ENCODE measurements at regions of chr4 and their contacts with region 1.

Region 1: GRCh38 chr4:18593445-18594002 is 572.0 kb upstream of the LCORL start:
- DNase-seq: peak in 32 of 35 experiments; percentile 0 to 77 (median 30)
- ATAC-seq: peak in 3 of 4 experiments; percentile 58 to 63 (median 59)
- H3K4me3 ChIP-seq: no peak overlapping the region
- H3K4me3 Mint-ChIP-seq: no peak overlapping the region
- H3K27ac ChIP-seq: no peak overlapping the region
- H3K27ac Mint-ChIP-seq: no peak overlapping the region
- H3K4me1 ChIP-seq: no peaks in the 10 kb centered on the region
- H3K4me1 Mint-ChIP-seq: peaks cover 5 to 6% (median 6%) of the 10 kb centered on the region in 3 donors
- H3K27me3 ChIP-seq: no peaks in the 10 kb centered on the region
- H3K27me3 Mint-ChIP-seq: peaks cover 19 to 23% of the 10 kb centered on the region in 2 donors

Region 2: DNA sequence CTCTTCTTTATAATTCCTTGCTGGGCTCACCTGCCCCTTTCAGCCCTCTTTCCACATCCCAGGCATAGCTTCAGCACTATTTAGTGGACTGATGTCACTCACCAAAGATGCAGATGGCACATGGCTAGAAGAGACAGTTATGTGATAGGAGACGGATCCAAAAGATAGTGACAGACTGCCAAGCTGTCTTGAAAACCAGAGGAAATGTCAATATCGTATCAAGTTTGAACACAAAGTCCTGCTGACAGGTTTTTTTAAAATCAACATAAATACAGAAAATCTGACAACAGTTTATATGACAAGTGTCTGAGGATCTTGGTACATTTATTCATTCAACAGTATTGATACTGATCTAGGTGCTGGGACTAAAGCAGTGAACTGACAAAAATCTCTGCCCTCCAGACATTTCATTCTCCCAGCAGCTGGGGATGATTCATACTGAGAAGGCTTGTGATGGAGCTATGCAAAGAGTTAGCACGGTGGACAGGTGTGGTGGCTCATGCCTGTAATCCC is 1064.0 kb before region 1 on chr4:
- CTCF ChIA-PET with region 1: interaction called in 1 of 2 experiments, 11 read pairs
- POLR2A ChIA-PET with region 1: no interaction called
- DNase-seq: no peak
- ATAC-seq: no peak
- H3K4me3 ChIP-seq: no peak overlapping the region
- H3K4me3 Mint-ChIP-seq: no peak overlapping the region
- H3K27ac ChIP-seq: no peak overlapping the region
- H3K27ac Mint-ChIP-seq: no peak overlapping the region
- H3K4me1 ChIP-seq: no peaks in the 10 kb centered on the region
- H3K4me1 Mint-ChIP-seq: no peaks in the 10 kb centered on the region
- H3K27me3 ChIP-seq: peaks cover under 1 to 17% of the 10 kb centered on the region in 2 experiments
- H3K27me3 Mint-ChIP-seq: peaks cover 24 to 26% of the 10 kb centered on the region in 2 donors

Region 3: DNA sequence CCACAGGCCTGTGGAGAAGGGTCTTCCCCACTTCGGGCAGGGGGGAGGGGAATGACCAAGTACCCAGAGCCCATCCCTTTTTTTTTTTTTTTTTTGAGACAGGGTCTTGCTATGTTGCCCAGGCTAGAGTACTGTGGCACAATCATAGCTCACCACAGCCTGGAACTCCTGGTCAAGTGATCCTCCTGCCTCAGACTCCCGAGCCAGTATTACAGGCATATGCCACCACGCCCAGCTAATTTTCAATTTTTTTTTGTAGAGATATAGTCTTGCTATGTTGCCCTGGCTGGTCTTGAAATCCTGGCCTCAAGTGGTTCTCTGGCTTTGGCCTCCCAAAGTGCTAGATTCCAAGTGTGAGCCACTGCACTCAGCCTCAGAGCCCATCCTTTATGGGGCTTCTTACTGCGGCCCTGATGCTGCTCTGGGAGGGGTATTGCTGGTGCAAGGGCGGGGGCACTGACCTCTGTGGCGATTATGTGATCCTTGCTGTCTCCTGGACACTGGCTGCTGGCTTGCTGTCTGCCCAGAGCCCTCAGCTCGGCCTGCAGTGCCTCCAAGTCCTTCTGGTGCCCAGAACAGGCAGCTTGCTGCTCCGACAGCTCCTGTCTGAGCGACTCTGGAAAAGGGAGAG is 946.2 kb before region 1 on chr4:
- CTCF ChIA-PET with region 1: no interaction called
- POLR2A ChIA-PET with region 1: interaction called in 1 of 2 experiments, 12 read pairs
- DNase-seq: no peak
- ATAC-seq: no peak
- H3K4me3 ChIP-seq: no peak overlapping the region
- H3K4me3 Mint-ChIP-seq: no peak overlapping the region
- H3K27ac ChIP-seq: no peak overlapping the region
- H3K27ac Mint-ChIP-seq: no peak overlapping the region
- H3K4me1 ChIP-seq: peaks cover 8 to 16% of the 10 kb centered on the region in 2 experiments
- H3K4me1 Mint-ChIP-seq: peaks cover 16 to 29% (median 18%) of the 10 kb centered on the region in 3 donors
- H3K27me3 ChIP-seq: peaks cover 0 to 20% of the 10 kb centered on the region in 2 experiments
- H3K27me3 Mint-ChIP-seq: no peaks in the 10 kb centered on the region

Region 4: GRCh38 chr4:17817020-17817419 is 776.5 kb before region 1 on chr4:
- CTCF ChIA-PET with region 1: interaction called, 10 to 31 read pairs
- POLR2A ChIA-PET with region 1: no interaction called
- DNase-seq: peak in 2 of 35 experiments; percentile 5 to 66
- ATAC-seq: peak; percentile 66 to 88 (median 81)
- H3K4me3 ChIP-seq: no peak overlapping the region
- H3K4me3 Mint-ChIP-seq: no peak overlapping the region
- H3K27ac ChIP-seq: no peak overlapping the region
- H3K27ac Mint-ChIP-seq: peak overlapping the region in 1 of 2 donors; percentile 40
- H3K4me1 ChIP-seq: no peaks in the 10 kb centered on the region
- H3K4me1 Mint-ChIP-seq: peaks cover 3 to 34% (median 5%) of the 10 kb centered on the region in 3 donors
- H3K27me3 ChIP-seq: no peaks in the 10 kb centered on the region
- H3K27me3 Mint-ChIP-seq: no peaks in the 10 kb centered on the region

Region 5: GRCh38 chr4:18381186-18381585 is 212.3 kb before region 1 on chr4:
- CTCF ChIA-PET with region 1: no interaction called
- POLR2A ChIA-PET with region 1: no interaction called
- DNase-seq: no peak
- ATAC-seq: no peak
- H3K4me3 ChIP-seq: no peak overlapping the region
- H3K4me3 Mint-ChIP-seq: no peak overlapping the region
- H3K27ac ChIP-seq: no peak overlapping the region
- H3K27ac Mint-ChIP-seq: no peak overlapping the region
- H3K4me1 ChIP-seq: no peaks in the 10 kb centered on the region
- H3K4me1 Mint-ChIP-seq: no peaks in the 10 kb centered on the region
- H3K27me3 ChIP-seq: no peaks in the 10 kb centered on the region
- H3K27me3 Mint-ChIP-seq: peaks cover 8 to 12% of the 10 kb centered on the region in 2 donors

Region 6: GRCh38 chr4:18540349-18540748 is 53.2 kb before region 1 on chr4:
- CTCF ChIA-PET with region 1: no interaction called
- POLR2A ChIA-PET with region 1: no interaction called
- DNase-seq: no peak
- ATAC-seq: no peak
- H3K4me3 ChIP-seq: no peak overlapping the region
- H3K4me3 Mint-ChIP-seq: no peak overlapping the region
- H3K27ac ChIP-seq: no peak overlapping the region
- H3K27ac Mint-ChIP-seq: no peak overlapping the region
- H3K4me1 ChIP-seq: no peaks in the 10 kb centered on the region
- H3K4me1 Mint-ChIP-seq: no peaks in the 10 kb centered on the region
- H3K27me3 ChIP-seq: no peaks in the 10 kb centered on the region
- H3K27me3 Mint-ChIP-seq: peaks cover 4 to 10% of the 10 kb centered on the region in 2 donors

Region 7: DNA sequence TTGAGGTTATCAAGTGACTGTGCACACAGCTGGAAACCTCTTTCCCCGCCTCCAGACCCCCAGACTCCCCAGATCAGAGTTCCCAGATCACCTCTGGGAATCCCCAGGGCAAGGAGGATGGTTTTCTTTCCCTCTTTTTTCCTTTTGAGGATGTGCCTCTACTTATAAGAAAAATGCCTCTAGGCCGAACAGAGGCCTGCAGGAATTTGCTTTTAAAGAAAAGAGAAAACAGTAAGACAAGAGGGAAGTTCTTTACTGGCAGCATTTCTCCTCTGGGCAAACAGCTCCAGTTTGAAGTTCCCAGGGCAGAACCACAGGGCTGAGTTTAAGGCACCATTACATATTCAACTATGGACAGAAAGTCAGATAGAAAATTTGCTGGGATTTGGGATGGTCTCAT is 265.9 kb after region 1 on chr4:
- CTCF ChIA-PET with region 1: no interaction called
- POLR2A ChIA-PET with region 1: no interaction called
- DNase-seq: no peak
- ATAC-seq: no peak
- H3K4me3 ChIP-seq: no peak overlapping the region
- H3K4me3 Mint-ChIP-seq: no peak overlapping the region
- H3K27ac ChIP-seq: no peak overlapping the region
- H3K27ac Mint-ChIP-seq: no peak overlapping the region
- H3K4me1 ChIP-seq: no peaks in the 10 kb centered on the region
- H3K4me1 Mint-ChIP-seq: no peaks in the 10 kb centered on the region
- H3K27me3 ChIP-seq: no peaks in the 10 kb centered on the region
- H3K27me3 Mint-ChIP-seq: no peaks in the 10 kb centered on the region